ENCODE measurements at regions of chr9 and their contacts with region 1.

Region 1: GRCh38 chr9:130860458-130861316 is 25.6 kb downstream of the ABL1 start:
- DNase-seq: peak in 3 of 6 donors; percentile 25 to 57 (median 40)
- ATAC-seq: peak; percentile 35 to 80 (median 68)
- H3K4me3 ChIP-seq: no peak overlapping the region
- H3K27ac ChIP-seq: no peak overlapping the region
- H3K4me1 ChIP-seq: no peaks in the 10 kb centered on the region
- H3K27me3 ChIP-seq: no peaks in the 10 kb centered on the region
- CTCF ChIP-seq: no peak

Region 2: DNA sequence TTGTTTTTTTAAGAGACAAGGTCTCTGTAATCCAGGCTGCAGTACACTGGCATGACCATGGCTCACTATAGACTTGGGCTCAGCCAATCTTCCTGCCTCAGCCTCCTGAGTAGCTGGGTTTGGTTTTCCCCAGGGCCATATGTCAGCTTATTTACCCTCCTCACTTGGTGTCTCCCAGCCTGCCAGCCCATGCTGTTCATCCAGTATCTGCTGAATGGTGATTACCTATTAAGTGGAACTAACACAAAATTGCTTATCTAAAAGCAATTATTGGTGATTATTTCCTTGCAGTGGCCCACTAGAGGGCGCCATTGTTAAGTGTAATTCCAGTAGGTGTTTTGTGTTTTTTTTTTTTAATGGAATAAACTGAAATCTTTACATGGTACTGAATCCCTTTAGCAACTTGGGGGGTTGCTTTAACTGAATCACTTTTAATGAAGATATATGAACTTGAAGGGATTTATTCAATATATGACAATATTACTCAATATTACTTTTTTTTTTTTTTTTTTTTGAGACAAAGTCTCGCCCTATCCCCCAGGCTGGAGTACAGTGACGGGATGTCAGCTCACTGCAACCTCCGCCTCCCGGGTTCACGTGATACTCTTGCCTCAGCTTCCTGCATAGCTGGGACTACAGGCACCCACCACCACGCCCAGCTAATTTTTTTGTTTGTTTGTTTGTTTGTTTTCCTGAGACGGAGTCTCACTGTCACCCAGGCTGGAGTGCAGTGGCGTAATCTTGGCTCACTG is 153.3 kb before region 1 on chr9:
- intact Hi-C with region 1: loop called (anchors 5 to 10 kb)
- DNase-seq: peak in 4 of 6 donors; percentile 47 to 76 (median 72)
- ATAC-seq: peak in 3 of 4 donors; percentile 48 to 65 (median 56)
- H3K4me3 ChIP-seq: no peak overlapping the region
- H3K27ac ChIP-seq: no peak overlapping the region
- H3K4me1 ChIP-seq: no peaks in the 10 kb centered on the region
- H3K27me3 ChIP-seq: no peaks in the 10 kb centered on the region
- CTCF ChIP-seq: peak; percentile 72 to 79 (median 74)

Region 3: DNA sequence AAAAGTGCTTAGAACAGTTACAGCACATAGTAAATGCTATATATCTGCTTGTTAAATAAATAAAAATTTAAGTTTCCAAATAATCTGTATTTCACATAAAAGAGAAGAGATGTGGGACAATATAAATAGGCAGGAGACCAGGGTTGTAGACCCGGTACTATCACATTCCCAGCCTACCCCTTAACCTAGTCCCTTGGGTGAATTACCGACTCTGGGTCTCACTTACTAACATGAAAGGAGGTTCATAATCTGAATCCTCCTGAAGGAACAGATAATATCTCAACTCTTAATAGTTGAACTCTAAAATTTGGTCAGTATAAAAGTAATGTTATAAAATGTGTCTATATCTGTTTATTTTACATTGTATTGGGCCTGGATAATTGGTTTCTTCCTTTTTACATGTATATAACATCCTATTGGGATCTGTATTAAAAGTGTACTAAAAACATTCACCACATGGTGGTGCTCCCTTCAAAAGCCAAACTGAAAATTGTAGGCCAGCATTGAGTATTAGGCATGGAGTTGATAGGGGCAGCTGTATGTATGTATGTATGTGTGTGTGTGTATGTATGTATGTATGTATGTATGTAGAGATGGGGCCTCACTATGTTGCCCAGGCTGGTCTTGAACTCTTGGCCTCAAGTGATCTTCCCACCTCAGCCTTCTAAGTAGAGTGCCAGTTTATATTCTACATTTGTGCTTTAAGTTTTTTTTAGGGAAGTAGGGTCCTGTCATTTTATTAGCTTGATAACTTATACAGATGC is 89.8 kb before region 1 on chr9:
- intact Hi-C with region 1: loop called in 1 of 3 experiments (anchors 5 kb)
- DNase-seq: no peak
- ATAC-seq: peak; percentile 55 to 86 (median 84)
- H3K4me3 ChIP-seq: no peak overlapping the region
- H3K27ac ChIP-seq: no peak overlapping the region
- H3K4me1 ChIP-seq: peaks cover 0 to 13% (median 5%) of the 10 kb centered on the region in 3 donors
- H3K27me3 ChIP-seq: no peaks in the 10 kb centered on the region
- CTCF ChIP-seq: peak in 2 of 4 donors; percentile 24 to 28